CD4-positive, alpha-beta memory T cell (primary cell): ENCODE measurements at regions of chr10 and their contacts with region 1.

Region 1: GRCh38 chr10:102641880-102642735 is 2.2 kb upstream of the TRIM8 start:
- DNase-seq: peak; percentile 91 to 99 (median 95)
- H3K4me3 ChIP-seq: peak overlapping the region; percentile 26 to 78
- H3K4me3 Mint-ChIP-seq: peak overlapping the region; percentile 90 to 97 (median 94)
- H3K27ac ChIP-seq: peak overlapping the region; percentile 94
- H3K27ac Mint-ChIP-seq: peak overlapping the region; percentile 96 to 99 (median 98)
- H3K4me1 ChIP-seq: peaks cover 14% of the 10 kb centered on the region
- H3K4me1 Mint-ChIP-seq: peaks cover 13 to 39% (median 18%) of the 10 kb centered on the region in 4 donors
- H3K27me3 ChIP-seq: no peaks in the 10 kb centered on the region
- H3K27me3 Mint-ChIP-seq: no peaks in the 10 kb centered on the region

Region 2: DNA sequence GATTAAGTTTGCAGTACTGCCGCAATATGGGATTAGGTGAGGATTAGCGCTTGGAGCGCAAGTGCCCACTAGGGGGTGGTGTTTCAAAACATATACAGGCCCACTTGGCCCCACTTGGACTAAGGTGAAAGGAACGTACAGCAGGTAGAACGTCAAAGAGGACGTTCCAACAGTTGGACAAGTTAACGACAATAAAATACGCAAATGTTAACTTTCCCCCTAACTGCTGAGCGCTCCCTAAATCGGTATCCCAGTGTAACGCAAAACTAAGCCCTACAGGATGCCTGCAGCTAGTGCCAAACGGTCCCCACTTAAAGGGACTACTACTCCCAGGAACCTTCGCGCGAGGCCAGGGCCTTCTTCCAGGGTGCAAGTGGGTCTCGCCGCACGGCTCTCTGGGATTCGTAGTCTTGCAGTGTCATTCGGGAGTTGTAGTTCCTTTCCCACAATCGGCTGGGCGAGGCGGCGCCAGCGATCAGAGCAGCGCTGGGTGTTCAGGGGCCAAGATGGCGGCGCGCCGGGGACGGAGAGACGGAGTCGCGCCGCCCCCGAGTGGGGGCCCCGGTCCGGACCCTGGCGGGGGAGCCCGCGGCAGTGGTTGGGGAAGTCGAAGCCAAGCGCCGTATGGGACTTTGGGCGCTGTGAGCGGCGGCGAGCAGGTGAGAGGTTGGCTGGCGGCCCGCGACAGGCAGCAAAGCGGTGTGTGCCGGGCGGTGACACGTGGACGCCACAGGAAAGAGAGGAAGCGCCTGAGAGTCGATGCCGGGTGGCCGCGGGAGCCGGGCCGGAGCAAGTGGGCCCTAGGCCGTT is 509.3 kb before region 1 on chr10 and contains the start of gene PPRC1:
- CTCF ChIA-PET with region 1: no interaction called
- POLR2A ChIA-PET with region 1: interaction called, 3 read pairs
- intact Hi-C with region 1: loop called (anchors 1 kb)
- DNase-seq: peak; percentile 97 to 99 (median 97)
- H3K4me3 ChIP-seq: peak within 1 kb of the TSS; percentile 55 to 61
- H3K4me3 Mint-ChIP-seq: peak within 1 kb of the TSS; percentile 92 to 99 (median 96)
- H3K27ac ChIP-seq: peak within 1 kb of the TSS; percentile 88
- H3K27ac Mint-ChIP-seq: peak within 1 kb of the TSS; percentile 93 to 99 (median 96)
- H3K4me1 ChIP-seq: peaks cover 38% of the 10 kb centered on the region
- H3K4me1 Mint-ChIP-seq: peaks cover 27 to 50% (median 38%) of the 10 kb centered on the region in 4 donors
- H3K27me3 ChIP-seq: no peaks in the 10 kb centered on the region
- H3K27me3 Mint-ChIP-seq: no peaks in the 10 kb centered on the region
- total RNA-seq, gene PPRC1: 38.9 to 39.8 TPM

Region 3: GRCh38 chr10:102420810-102421644 is 221.1 kb before region 1 on chr10 and contains the start of gene FBXL15:
- CTCF ChIA-PET with region 1: no interaction called
- POLR2A ChIA-PET with region 1: interaction called, 25 read pairs
- intact Hi-C with region 1: no loop called
- DNase-seq: peak; percentile 92 to 94 (median 93)
- H3K4me3 ChIP-seq: peak within 1 kb of the TSS; percentile 61 to 90
- H3K4me3 Mint-ChIP-seq: peak within 1 kb of the TSS; percentile 90 to 99 (median 96)
- H3K27ac ChIP-seq: peak within 1 kb of the TSS; percentile 64
- H3K27ac Mint-ChIP-seq: peak within 1 kb of the TSS; percentile 92 to 98 (median 96)
- H3K4me1 ChIP-seq: peaks cover 37% of the 10 kb centered on the region
- H3K4me1 Mint-ChIP-seq: peaks cover 17 to 53% (median 33%) of the 10 kb centered on the region in 4 donors
- H3K27me3 ChIP-seq: peaks cover 9% of the 10 kb centered on the region
- H3K27me3 Mint-ChIP-seq: peaks cover 10 to 16% of the 10 kb centered on the region in 2 donors
- total RNA-seq, gene FBXL15: 21.1 to 24.1 TPM

Region 4: GRCh38 chr10:102611514-102612087 is 30.5 kb before region 1 on chr10:
- CTCF ChIA-PET with region 1: interaction called, 10 read pairs
- POLR2A ChIA-PET with region 1: interaction called, 53 read pairs
- intact Hi-C with region 1: loop called (anchors 2 kb)
- DNase-seq: peak in 1 of 5 donors; percentile 20
- H3K4me3 ChIP-seq: no peak overlapping the region
- H3K4me3 Mint-ChIP-seq: peak overlapping the region in 6 of 8 donors; percentile 30 to 72 (median 42)
- H3K27ac ChIP-seq: peak overlapping the region; percentile 27
- H3K27ac Mint-ChIP-seq: peak overlapping the region; percentile 94 to 99 (median 99)
- H3K4me1 ChIP-seq: peaks cover 44% of the 10 kb centered on the region
- H3K4me1 Mint-ChIP-seq: peaks cover 27 to 54% (median 36%) of the 10 kb centered on the region in 4 donors
- H3K27me3 ChIP-seq: no peaks in the 10 kb centered on the region
- H3K27me3 Mint-ChIP-seq: no peaks in the 10 kb centered on the region

Region 5: DNA sequence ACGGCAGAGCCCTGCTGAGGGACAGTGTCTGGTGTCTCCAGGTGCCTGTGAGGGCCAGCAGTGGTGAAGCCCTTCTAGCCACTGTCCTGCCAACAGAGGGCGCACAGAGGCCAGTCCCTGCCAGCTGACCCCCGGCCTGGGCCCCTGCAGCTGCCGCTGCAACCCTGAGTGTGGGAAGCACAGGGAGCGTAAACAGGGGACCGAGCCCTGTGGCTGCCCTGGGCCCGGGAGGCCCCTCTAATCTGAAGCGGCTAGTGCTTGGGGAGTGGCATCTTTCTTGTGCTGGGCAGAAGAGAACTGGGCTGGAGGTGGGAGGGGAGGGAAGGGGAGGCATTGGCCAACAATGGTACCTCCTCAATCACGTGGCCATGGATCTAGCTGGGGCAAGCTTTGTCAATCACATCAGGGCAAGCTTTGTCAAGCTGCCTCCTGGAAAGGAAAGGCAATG is 36.8 kb after region 1 on chr10:
- CTCF ChIA-PET with region 1: interaction called, 44 read pairs
- POLR2A ChIA-PET with region 1: interaction called, 431 read pairs
- intact Hi-C with region 1: loop called (anchors 1 kb)
- DNase-seq: no peak
- H3K4me3 ChIP-seq: no peak overlapping the region
- H3K4me3 Mint-ChIP-seq: no peak overlapping the region
- H3K27ac ChIP-seq: no peak overlapping the region
- H3K27ac Mint-ChIP-seq: peak overlapping the region in 5 of 7 donors; percentile 25 to 83 (median 64)
- H3K4me1 ChIP-seq: peaks cover 41% of the 10 kb centered on the region
- H3K4me1 Mint-ChIP-seq: peaks cover 23 to 57% (median 46%) of the 10 kb centered on the region in 4 donors
- H3K27me3 ChIP-seq: no peaks in the 10 kb centered on the region
- H3K27me3 Mint-ChIP-seq: no peaks in the 10 kb centered on the region

Region 6: GRCh38 chr10:102785621-102786217 is 143.6 kb after region 1 on chr10:
- CTCF ChIA-PET with region 1: no interaction called
- POLR2A ChIA-PET with region 1: no interaction called
- intact Hi-C with region 1: no loop called
- DNase-seq: no peak
- H3K4me3 ChIP-seq: no peak overlapping the region
- H3K4me3 Mint-ChIP-seq: no peak overlapping the region
- H3K27ac ChIP-seq: no peak overlapping the region
- H3K27ac Mint-ChIP-seq: peak overlapping the region in 4 of 7 donors; percentile 5 to 74 (median 28)
- H3K4me1 ChIP-seq: peaks cover 31% of the 10 kb centered on the region
- H3K4me1 Mint-ChIP-seq: peaks cover 38 to 66% (median 51%) of the 10 kb centered on the region in 4 donors
- H3K27me3 ChIP-seq: no peaks in the 10 kb centered on the region
- H3K27me3 Mint-ChIP-seq: no peaks in the 10 kb centered on the region

Region 7: DNA sequence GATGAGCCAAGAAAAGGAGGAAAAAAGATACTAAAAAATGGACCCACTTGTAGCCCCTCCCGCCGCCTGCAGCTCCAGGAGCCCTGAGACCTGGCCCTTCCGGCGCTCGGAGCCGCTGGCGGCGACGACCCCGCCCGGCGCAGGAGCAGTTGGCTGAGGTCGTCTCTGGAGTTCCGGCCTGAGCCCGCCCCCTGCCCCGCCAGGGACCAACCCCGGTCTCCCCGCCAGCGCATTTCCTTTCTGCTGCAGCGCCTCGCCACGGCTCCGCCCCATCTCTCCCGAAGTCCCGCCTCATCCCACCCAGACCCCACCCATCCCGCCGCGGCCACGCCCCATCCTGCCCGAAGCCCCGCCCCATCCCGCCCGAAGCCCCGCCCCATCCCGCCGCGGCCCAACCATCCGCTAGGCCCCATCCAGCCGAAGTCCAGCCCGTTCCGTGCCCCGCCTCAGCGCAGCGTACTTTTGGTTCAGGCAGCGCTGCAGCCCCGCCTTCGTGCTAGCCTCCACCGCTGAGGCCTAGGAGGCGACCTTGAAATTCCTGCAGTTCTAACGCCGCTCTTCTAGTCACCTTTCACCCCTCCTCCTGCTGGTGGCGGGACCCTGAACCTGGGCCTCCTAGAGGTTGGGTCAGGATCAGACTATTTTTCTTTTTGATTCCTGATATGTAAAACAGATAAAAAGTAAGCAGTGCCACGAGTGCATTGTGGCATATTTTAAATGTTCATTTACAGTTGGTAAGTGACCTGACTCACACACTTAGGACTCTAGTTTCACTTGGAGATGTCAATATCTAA is 1276.1 kb after region 1 on chr10 and contains the start of gene STN1:
- CTCF ChIA-PET with region 1: no interaction called
- POLR2A ChIA-PET with region 1: no interaction called
- intact Hi-C with region 1: loop called (anchors 5 kb)
- DNase-seq: peak; percentile 93 to 96 (median 95)
- H3K4me3 ChIP-seq: peak within 1 kb of the TSS; percentile 69 to 95
- H3K4me3 Mint-ChIP-seq: peak within 1 kb of the TSS; percentile 92 to 99 (median 96)
- H3K27ac ChIP-seq: peak within 1 kb of the TSS; percentile 82
- H3K27ac Mint-ChIP-seq: peak within 1 kb of the TSS; percentile 91 to 98 (median 95)
- H3K4me1 ChIP-seq: peaks cover 53% of the 10 kb centered on the region
- H3K4me1 Mint-ChIP-seq: peaks cover 18 to 50% (median 30%) of the 10 kb centered on the region in 4 donors
- H3K27me3 ChIP-seq: no peaks in the 10 kb centered on the region
- H3K27me3 Mint-ChIP-seq: no peaks in the 10 kb centered on the region
- total RNA-seq, gene STN1: 30.4 to 31.6 TPM